Stomach (tissue), 19 donors: ENCODE measurements at regions of chr6 and their contacts with region 1.

Region 1: DNA sequence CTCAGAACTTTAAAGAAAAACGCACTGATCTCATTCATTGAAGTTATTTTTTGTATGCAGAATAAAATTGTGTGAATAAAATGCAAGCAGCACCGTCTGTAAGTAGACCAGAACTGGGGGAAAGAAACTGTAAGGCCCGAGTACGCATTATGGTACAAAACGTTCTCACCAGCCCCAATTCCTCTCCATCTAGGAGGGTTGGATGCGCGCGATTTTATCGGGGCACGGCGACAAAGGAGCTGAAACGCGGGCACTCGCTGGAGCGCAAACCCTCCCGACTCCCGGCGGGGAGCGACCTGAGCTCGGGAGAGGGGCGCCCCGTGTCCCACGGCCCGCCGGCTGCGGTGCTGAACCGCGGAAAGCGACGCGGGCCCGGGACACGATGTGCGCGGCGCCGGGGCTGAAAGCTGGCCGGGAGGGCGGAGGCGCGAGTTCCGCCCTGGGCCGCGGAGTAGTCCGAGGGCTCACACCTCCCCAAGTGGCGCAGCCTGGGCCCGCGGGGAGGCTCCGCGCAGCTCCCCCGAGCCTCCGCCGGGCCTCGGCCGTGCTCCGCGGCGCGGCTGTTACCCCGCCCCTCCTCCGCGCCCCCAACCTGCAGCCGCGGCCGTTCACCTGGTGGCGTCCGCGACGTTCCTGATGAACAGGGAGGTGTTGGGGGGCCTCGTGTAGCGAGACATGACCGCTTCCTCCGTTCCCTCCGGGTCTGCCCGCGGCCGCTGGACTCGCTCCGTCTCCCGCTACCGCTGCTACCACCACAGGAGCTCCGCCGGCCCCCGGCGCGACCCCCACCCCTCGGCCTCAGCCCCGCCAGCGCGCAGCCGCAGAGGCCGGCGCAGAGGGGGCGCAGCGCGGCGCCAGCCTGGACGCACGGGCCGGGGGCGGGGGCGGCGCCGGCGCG is at the start of gene SRSF12:
- DNase-seq: peak; percentile 48 to 82
- H3K4me3 ChIP-seq: peak within 1 kb of the TSS; percentile 53 to 90 (median 76)
- H3K27ac ChIP-seq: peak within 1 kb of the TSS in 4 of 5 donors; percentile 3 to 80 (median 46)
- H3K4me1 ChIP-seq: peaks cover 0 to 26% (median 18%) of the 10 kb centered on the region in 4 donors
- H3K27me3 ChIP-seq: no peaks in the 10 kb centered on the region
- CTCF ChIP-seq: no peak
- EP300 ChIP-seq: no peak
- POLR2A ChIP-seq: no peak
- total RNA-seq, gene SRSF12: 6.8 TPM in 1 of 5 donors, not detected in the others

Region 2: GRCh38 chr6:88975369-88975768 is 142.1 kb before region 1 on chr6:
- intact Hi-C with region 1: loop called (anchors 10 kb)
- DNase-seq: no peak
- H3K4me3 ChIP-seq: no peak overlapping the region
- H3K27ac ChIP-seq: no peak overlapping the region
- H3K4me1 ChIP-seq: no peaks in the 10 kb centered on the region
- H3K27me3 ChIP-seq: no peaks in the 10 kb centered on the region
- CTCF ChIP-seq: no peak
- EP300 ChIP-seq: no peak
- POLR2A ChIP-seq: no peak